ENCODE measurements at regions of chr17 and their contacts with region 1.

Region 1: GRCh38 chr17:27929990-27930389 is 36.8 kb upstream of the LYRM9 start:
- DNase-seq: no peak
- H3K4me3 ChIP-seq: no peak overlapping the region
- H3K27ac ChIP-seq: no peak overlapping the region
- H3K4me1 ChIP-seq: no peaks in the 10 kb centered on the region
- H3K27me3 ChIP-seq: no peaks in the 10 kb centered on the region
- CTCF ChIP-seq: no peak

Region 2: DNA sequence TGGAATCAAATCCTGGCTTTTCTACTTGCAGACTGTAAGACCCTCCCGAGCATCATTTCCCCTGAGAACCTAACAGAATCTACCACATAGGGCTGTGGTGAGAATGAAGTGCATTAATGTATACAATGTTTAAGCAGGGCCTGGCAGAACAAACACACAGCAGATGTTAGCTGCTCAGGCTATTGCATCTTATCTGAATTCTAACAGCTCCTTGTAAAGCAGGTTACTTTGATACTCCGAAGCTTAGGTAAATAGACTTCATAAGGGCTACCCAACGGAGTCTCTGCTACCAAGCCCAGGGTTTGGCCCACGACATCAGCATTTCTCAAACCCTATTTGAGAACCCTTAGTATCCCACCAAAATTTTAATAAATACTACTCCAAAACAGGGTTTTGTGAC is 105.2 kb before region 1 on chr17:
- CTCF ChIA-PET with region 1: no interaction called
- POLR2A ChIA-PET with region 1: interaction called, 17 read pairs
- intact Hi-C with region 1: no loop called
- DNase-seq: no peak
- H3K4me3 ChIP-seq: no peak overlapping the region
- H3K27ac ChIP-seq: no peak overlapping the region
- H3K4me1 ChIP-seq: no peaks in the 10 kb centered on the region
- H3K27me3 ChIP-seq: no peaks in the 10 kb centered on the region
- CTCF ChIP-seq: no peak

Measured in A673 (cell line).